ENCODE measurements at regions of chr10 and their contacts with region 1.

Region 1: GRCh38 chr10:104300736-104301292 is 31.8 kb downstream of the GSTO2 start:
- DNase-seq: no peak
- ATAC-seq: peak; percentile 48
- H3K4me3 Mint-ChIP-seq: no peak overlapping the region
- H3K27ac Mint-ChIP-seq: peak overlapping the region; percentile 6
- H3K4me1 Mint-ChIP-seq: peaks cover 24% of the 10 kb centered on the region
- H3K27me3 Mint-ChIP-seq: no peaks in the 10 kb centered on the region

Region 2: DNA sequence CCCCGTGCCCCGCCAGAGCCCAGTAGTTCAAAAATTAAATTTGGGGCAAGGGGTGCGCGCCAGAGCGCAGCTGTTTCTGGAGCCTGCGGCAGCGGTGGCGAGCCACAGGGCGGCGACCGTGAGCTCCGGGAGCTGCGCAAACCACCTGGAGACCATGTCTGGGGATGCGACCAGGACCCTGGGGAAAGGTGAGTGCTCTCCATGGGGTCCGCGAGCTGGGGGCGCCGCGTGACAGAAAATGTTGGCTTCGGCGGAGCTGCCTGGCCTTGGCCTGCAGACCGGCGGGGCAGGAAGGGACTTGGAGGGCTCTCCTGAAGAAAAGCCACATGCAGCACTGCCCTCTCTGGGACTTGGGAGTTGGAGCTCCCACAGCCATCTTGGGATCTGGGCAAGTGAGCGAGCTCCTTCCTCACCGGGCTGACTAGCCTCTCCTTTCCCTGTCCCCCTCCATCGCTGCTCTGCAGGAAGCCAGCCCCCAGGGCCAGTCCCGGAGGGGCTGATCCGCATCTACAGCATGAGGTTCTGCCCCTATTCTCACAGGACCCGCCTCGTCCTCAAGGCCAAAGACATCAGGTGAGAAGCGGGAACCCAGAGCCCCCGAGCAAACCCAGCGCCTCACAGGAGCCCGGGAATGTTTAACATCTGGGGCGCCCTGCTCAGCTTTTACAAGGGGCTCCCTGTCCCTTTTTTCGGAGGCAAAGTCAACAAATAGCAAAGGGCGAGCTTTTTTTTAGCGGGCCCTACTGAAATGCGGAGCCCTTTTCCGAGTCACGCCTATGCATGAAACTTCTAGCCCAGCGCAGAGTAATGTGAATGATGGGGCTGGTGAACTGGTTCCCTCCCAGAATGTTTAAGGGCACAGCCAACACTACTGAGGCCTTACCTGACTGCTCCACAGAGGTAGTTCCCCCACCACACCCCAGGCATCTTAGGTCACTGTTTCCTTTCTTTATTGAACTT is 25.8 kb before region 1 on chr10:
- CTCF ChIA-PET with region 1: interaction called, 26 read pairs
- DNase-seq: peak; percentile 53
- ATAC-seq: peak; percentile 80
- H3K4me3 Mint-ChIP-seq: peak overlapping the region; percentile 52
- H3K27ac Mint-ChIP-seq: no peak overlapping the region
- H3K4me1 Mint-ChIP-seq: peaks cover 7% of the 10 kb centered on the region
- H3K27me3 Mint-ChIP-seq: peaks cover 24% of the 10 kb centered on the region

Region 3: DNA sequence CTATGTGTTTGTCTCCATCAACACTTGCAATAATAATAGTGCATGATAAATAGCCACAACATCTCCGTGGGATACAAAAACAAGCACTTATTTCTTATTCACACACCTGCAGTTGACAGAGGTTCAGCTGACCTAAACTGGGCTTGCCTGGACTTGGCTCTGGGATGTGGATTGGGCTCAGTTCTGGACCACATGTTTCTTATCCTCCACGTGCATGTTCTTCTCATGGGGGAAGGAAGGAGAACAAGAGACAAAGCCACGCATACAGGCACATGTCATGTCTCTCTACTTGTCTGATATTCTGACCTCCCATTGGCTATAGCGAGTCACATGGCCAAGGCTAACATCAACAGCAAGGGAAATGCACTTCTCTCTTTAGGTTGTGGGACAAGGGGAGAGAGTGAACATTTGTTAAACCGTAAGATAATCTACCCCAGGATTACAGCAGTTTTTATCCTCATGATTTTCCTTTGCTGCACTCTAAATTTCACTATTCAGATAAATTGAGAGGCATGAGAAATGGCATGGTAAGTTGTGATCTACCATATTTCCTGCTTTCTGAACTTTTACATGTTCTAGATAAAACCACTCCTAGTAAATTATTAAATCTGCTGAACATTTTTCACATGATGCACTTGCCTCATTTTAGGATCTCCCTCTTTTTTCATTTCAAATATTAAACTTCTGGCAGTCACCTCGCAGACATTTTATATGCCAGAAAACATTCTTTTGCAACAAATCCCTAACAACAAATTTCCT is 86.5 kb after region 1 on chr10:
- CTCF ChIA-PET with region 1: no interaction called
- DNase-seq: no peak
- ATAC-seq: no peak
- H3K4me3 Mint-ChIP-seq: no peak overlapping the region
- H3K27ac Mint-ChIP-seq: no peak overlapping the region
- H3K4me1 Mint-ChIP-seq: peaks cover 17% of the 10 kb centered on the region
- H3K27me3 Mint-ChIP-seq: peaks cover 28% of the 10 kb centered on the region